CD14-positive monocyte (primary cell): ENCODE measurements at regions of chr1 and their contacts with region 1.

Region 1: GRCh38 chr1:8127171-8127641 is 101.1 kb upstream of the ERRFI1 start:
- DNase-seq: peak; percentile 74 to 83 (median 80)
- H3K4me3 ChIP-seq: peak overlapping the region in 2 of 3 experiments; percentile 34 to 52
- H3K4me3 Mint-ChIP-seq: peak overlapping the region; percentile 62 to 89
- H3K27ac ChIP-seq: peak overlapping the region; percentile 92 to 97
- H3K27ac Mint-ChIP-seq: peak overlapping the region; percentile 98 to 100 (median 99)
- H3K4me1 ChIP-seq: peaks cover 16 to 20% of the 10 kb centered on the region in 2 donors
- H3K4me1 Mint-ChIP-seq: peaks cover 21% of the 10 kb centered on the region
- H3K27me3 ChIP-seq: no peaks in the 10 kb centered on the region
- H3K27me3 Mint-ChIP-seq: peaks cover 9 to 10% (median 10%) of the 10 kb centered on the region in 3 donors
- CTCF ChIP-seq: no peak

Region 2: DNA sequence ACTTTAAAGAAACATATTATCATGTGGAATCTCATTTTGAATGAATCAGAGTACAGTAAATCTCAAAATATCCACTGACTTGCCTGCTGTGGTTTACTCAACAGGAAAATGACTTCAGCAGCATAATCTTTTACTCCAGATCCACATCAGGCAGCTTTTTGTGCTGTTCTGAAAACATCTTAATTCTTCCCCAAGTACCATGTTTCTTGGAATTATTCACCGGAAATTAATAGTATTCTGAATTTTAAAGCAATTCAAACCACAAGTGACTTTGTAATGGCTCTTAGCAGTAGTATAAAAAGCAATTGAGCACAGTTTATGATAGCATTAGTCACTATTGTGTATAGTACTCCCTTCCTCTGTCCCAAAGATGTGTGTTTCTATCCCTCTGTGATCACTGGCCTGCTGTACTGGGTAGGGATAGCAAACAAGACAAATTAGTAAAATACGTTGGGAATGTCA is 36.9 kb before region 1 on chr1:
- intact Hi-C with region 1: loop called (anchors 5 kb)
- DNase-seq: no peak
- H3K4me3 ChIP-seq: no peak overlapping the region
- H3K4me3 Mint-ChIP-seq: peak overlapping the region in 1 of 2 donors; percentile 35
- H3K27ac ChIP-seq: no peak overlapping the region
- H3K27ac Mint-ChIP-seq: no peak overlapping the region
- H3K4me1 ChIP-seq: no peaks in the 10 kb centered on the region
- H3K4me1 Mint-ChIP-seq: peaks cover 17% of the 10 kb centered on the region
- H3K27me3 ChIP-seq: peaks cover 0 to 7% of the 10 kb centered on the region in 2 donors
- H3K27me3 Mint-ChIP-seq: peaks cover 15 to 19% (median 17%) of the 10 kb centered on the region in 3 donors
- CTCF ChIP-seq: no peak

Region 3: DNA sequence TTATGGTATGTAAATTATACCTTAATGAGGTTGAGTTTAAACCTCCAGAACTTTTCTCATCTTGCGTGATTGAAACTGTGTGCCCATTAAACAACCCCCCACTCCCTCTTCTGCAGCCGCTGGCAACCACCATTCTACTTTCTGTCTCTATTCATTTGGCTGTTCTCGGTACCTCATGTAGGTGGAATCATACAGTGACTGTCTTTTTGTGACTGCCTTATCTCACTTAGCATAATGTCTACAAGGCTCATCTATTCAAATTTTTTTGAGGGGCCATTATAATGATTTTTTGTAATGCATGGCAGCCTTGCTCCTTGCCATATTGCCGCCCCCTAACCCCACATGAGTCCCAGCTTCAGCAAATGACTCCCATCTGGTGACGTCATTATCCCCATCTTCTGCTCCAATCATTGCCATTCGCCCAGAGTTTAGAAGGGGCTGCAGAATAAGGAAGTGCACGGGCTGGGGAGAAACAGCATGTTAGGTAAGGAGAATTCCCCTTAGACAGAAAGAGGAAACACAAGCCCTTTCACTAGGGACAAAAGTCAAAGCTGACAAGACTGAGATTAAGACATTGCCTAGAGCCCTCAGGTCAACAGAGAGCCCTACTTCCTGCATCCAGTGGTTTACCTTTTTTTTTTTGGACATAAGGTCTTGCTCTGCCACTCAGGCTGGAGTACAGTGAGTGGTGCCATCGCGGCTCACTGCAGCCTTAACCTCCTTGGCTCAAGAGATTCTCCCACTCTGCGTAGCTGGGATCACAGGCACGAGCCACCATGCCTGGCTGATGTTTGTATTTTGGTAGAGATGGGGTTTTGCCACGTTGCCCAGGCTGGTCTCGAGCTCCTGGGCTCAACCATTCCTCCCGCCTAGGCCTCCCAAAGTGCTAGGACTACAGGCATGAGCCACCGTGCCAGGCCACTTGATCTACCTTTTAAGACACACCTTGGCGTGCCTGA is 22.6 kb before region 1 on chr1:
- intact Hi-C with region 1: loop called in 1 of 2 experiments (anchors 2 kb)
- DNase-seq: peak; percentile 76 to 96 (median 80)
- H3K4me3 ChIP-seq: no peak overlapping the region
- H3K4me3 Mint-ChIP-seq: peak overlapping the region; percentile 9 to 27
- H3K27ac ChIP-seq: peak overlapping the region; percentile 72 to 82
- H3K27ac Mint-ChIP-seq: peak overlapping the region; percentile 76 to 94 (median 84)
- H3K4me1 ChIP-seq: peaks cover 24 to 33% of the 10 kb centered on the region in 2 donors
- H3K4me1 Mint-ChIP-seq: peaks cover 25% of the 10 kb centered on the region
- H3K27me3 ChIP-seq: no peaks in the 10 kb centered on the region
- H3K27me3 Mint-ChIP-seq: peaks cover 0 to 16% (median 2%) of the 10 kb centered on the region in 3 donors
- CTCF ChIP-seq: no peak